MCF 10A (cell line): ENCODE measurements at regions of chr3 and their contacts with region 1.

Region 1: GRCh38 chr3:42190701-42191462 is 75.1 kb downstream of the CCK start:
- DNase-seq: peak; percentile 78
- H3K4me3 Mint-ChIP-seq: no peak overlapping the region
- H3K27ac Mint-ChIP-seq: no peak overlapping the region
- H3K4me1 Mint-ChIP-seq: no peaks in the 10 kb centered on the region
- H3K27me3 Mint-ChIP-seq: no peaks in the 10 kb centered on the region
- CTCF ChIP-seq: peak; percentile 85

Region 2: GRCh38 chr3:41893977-41894376 is 296.9 kb before region 1 on chr3:
- CTCF ChIA-PET with region 1: interaction called, 41 read pairs
- POLR2A ChIA-PET with region 1: no interaction called
- intact Hi-C with region 1: loop called (anchors 1 kb)
- DNase-seq: peak; percentile 65
- H3K4me3 Mint-ChIP-seq: no peak overlapping the region
- H3K27ac Mint-ChIP-seq: no peak overlapping the region
- H3K4me1 Mint-ChIP-seq: no peaks in the 10 kb centered on the region
- H3K27me3 Mint-ChIP-seq: no peaks in the 10 kb centered on the region
- CTCF ChIP-seq: peak; percentile 40

Region 3: DNA sequence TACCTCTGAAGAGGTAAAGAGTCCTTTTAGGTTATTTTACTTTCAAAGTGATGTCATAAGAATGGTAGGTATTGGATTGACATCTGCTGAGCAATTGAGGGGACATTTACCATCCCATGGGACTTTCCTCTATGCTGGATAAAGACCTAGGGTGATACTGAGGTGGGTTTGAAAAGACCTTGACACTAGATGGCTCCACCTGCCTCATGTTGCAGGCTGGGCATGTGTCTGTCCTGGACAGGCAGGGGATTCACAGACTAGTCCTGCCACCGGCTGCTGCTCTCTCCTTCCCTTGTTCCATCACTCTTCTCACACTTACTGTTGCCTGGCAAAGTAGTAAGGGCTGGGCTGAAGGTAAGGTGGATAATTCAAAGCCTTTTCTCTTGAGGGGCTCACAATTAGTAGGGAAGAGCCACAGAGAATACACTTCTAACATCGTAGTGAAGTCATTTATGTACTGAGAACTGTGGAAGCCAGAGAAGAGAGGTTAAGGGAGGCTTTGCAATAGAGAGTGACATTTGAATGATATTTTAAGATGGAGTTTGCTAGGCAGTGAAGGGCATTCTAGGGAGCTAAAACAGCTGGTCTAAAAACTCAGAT is 72.0 kb before region 1 on chr3:
- CTCF ChIA-PET with region 1: interaction called, 369 read pairs
- POLR2A ChIA-PET with region 1: interaction called, 10 read pairs
- intact Hi-C with region 1: loop called (anchors 1 kb)
- DNase-seq: peak; percentile 72
- H3K4me3 Mint-ChIP-seq: no peak overlapping the region
- H3K27ac Mint-ChIP-seq: peak overlapping the region; percentile 72
- H3K4me1 Mint-ChIP-seq: peaks cover 49% of the 10 kb centered on the region
- H3K27me3 Mint-ChIP-seq: no peaks in the 10 kb centered on the region
- CTCF ChIP-seq: peak; percentile 36

Region 4: DNA sequence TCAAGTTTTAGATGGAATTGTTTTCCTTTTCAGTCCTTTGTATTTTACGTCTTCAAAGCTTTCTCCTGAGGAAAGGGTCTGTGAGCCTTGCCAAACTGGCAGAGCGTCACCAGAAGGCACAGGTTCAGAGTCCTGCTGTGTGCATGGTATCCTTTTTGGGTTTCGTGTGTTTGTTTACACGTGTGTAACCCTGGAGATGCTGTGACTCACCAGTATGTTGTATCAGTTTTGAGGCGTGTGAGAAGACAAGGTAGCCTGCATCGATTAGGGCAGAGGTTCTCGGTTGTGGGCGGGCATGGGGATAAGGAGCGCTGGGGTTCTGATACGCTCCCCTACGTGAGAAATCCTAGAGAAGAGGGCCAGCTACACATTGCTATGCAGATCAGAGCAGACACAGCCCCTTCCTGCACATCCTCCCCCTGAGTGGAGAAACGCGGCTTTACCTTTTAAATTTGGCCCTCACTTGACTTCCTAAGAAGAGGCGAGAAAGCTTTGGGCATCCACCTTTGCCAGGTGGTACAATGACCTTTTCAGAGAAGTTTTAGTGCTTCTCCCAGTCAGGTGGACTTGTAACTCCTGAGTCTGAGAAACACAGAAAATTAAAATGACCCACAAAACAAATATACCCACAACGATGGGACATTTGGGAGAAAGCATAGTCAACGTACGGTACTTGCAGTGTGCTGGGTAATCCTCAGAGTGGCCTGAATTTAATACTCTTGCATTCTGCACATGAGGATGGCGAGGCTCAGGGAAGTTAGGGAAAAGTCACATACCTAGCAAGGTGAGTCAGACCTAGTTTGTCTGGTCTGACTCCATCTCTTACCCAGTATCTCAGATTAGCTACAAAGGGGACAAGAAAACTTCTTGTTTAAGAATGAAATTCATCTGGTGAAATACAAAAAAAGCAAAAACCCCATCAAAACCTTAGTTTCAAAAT is 61.6 kb before region 1 on chr3:
- CTCF ChIA-PET with region 1: interaction called, 50 read pairs
- POLR2A ChIA-PET with region 1: interaction called, 8 read pairs
- intact Hi-C with region 1: no loop called
- DNase-seq: peak; percentile 54
- H3K4me3 Mint-ChIP-seq: no peak overlapping the region
- H3K27ac Mint-ChIP-seq: peak overlapping the region; percentile 81
- H3K4me1 Mint-ChIP-seq: peaks cover 8% of the 10 kb centered on the region
- H3K27me3 Mint-ChIP-seq: no peaks in the 10 kb centered on the region
- CTCF ChIP-seq: no peak

Region 5: DNA sequence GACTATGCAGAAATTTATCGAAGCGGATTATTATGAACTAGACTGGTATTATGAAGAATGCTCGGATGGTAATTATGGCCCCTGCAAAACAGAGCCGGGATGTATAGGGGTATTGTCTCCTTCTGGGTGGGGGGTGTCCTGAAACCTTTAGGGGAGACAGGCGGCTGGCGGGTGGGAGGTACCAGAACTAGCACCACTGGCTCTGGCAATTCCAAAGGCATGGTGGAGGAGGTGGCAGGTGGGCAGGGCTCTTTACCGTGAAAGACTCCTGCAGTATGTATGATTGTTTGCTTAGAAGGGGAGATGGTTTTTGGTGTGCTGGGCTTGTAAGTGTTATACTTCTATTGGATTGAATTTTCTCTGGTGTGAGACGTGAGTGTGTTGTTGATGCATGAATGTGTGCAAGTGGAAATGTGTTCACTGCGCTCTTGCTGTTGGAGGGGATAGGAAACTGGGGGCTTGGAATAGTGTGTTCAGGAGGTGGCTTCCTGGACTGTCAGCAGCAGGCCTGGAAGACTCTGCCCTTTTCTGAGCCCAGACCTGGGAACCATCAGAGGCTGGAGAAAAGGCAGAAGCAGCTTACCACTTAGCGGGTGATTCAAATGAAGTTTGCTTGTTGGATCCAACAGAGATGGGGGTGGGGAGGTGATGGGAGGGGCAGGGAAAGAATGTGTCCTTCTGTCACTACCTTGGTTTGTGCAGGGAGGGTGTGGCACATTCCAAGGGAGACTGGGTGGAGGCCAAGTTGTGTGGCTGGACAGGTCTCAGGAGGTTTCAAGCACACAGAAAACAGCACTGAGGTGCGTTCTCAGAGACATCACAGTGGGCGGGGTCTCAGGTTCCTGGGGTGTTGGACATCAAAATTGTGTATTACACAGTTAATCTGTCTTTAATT is 41.1 kb before region 1 on chr3:
- CTCF ChIA-PET with region 1: interaction called, 22 read pairs
- POLR2A ChIA-PET with region 1: no interaction called
- intact Hi-C with region 1: no loop called
- DNase-seq: peak; percentile 44
- H3K4me3 Mint-ChIP-seq: peak overlapping the region; percentile 32
- H3K27ac Mint-ChIP-seq: peak overlapping the region; percentile 47
- H3K4me1 Mint-ChIP-seq: peaks cover 25% of the 10 kb centered on the region
- H3K27me3 Mint-ChIP-seq: no peaks in the 10 kb centered on the region
- CTCF ChIP-seq: no peak

Region 6: GRCh38 chr3:42179110-42179725 is 11.7 kb before region 1 on chr3:
- CTCF ChIA-PET with region 1: interaction called, 36 read pairs
- POLR2A ChIA-PET with region 1: no interaction called
- intact Hi-C with region 1: no loop called
- DNase-seq: peak; percentile 94
- H3K4me3 Mint-ChIP-seq: no peak overlapping the region
- H3K27ac Mint-ChIP-seq: peak overlapping the region; percentile 85
- H3K4me1 Mint-ChIP-seq: peaks cover 9% of the 10 kb centered on the region
- H3K27me3 Mint-ChIP-seq: no peaks in the 10 kb centered on the region
- CTCF ChIP-seq: no peak

Region 7: GRCh38 chr3:42214565-42215283 is 23.8 kb after region 1 on chr3:
- CTCF ChIA-PET with region 1: interaction called, 19 read pairs
- POLR2A ChIA-PET with region 1: no interaction called
- intact Hi-C with region 1: no loop called
- DNase-seq: no peak
- H3K4me3 Mint-ChIP-seq: no peak overlapping the region
- H3K27ac Mint-ChIP-seq: no peak overlapping the region
- H3K4me1 Mint-ChIP-seq: peaks cover 26% of the 10 kb centered on the region
- H3K27me3 Mint-ChIP-seq: no peaks in the 10 kb centered on the region
- CTCF ChIP-seq: no peak